ENCODE measurements at regions of chr11 and their contacts with region 1.

Region 1: GRCh38 chr11:72648384-72649136 is 25.7 kb downstream of the PDE2A start:
- DNase-seq: no peak
- H3K4me3 ChIP-seq: no peak overlapping the region
- H3K27ac ChIP-seq: no peak overlapping the region
- H3K4me1 ChIP-seq: no peaks in the 10 kb centered on the region
- H3K27me3 ChIP-seq: no peaks in the 10 kb centered on the region
- CTCF ChIP-seq: no peak
- POLR2A ChIP-seq: no peak

Region 2: DNA sequence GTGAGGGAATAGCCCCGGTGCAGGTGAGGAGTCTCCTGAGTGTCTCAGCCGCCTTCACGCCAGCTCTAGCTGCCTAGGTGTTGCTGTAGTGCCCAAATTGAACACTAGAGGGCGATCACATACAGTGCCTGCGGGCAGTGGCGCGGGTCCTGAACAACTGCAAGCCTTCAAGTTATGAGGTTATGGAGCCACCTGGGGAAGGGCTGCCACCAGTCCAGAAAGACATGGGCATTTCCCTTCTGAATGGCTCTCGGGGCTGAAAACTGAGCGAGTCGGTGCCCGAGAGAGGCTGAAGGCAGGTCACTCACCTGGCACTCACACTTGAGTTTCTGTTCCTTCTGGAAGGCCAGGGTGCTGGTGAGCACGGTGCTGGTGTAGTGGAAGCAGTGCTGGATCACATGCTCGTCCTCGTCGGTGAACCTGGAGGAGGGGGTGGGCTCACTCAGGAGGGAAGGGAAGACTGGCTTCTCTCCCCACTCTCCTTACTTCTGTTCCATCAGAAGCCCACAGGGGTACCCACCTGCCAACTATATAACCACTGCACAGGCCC is 62.7 kb before region 1 on chr11:
- intact Hi-C with region 1: loop called in 1 of 2 experiments (anchors 5 kb)
- DNase-seq: peak; percentile 50 to 84 (median 72)
- H3K4me3 ChIP-seq: no peak overlapping the region
- H3K27ac ChIP-seq: no peak overlapping the region
- H3K4me1 ChIP-seq: no peaks in the 10 kb centered on the region
- H3K27me3 ChIP-seq: no peaks in the 10 kb centered on the region
- CTCF ChIP-seq: peak; percentile 90 to 97 (median 95)
- POLR2A ChIP-seq: no peak